Dendritic cell treated with granulocyte-macrophage colony-stimulating factor and Interleukin-4, amounts not matched to agents 40 ng/mL and 50 ng/mL, for 4 days (primary cell): ENCODE measurements at regions of chr15 and their contacts with region 1.

Region 1: GRCh38 chr15:100330629-100331215 is 11.1 kb downstream of the ADAMTS17 start:
- H3K4me3 Mint-ChIP-seq: no peak overlapping the region
- H3K27ac Mint-ChIP-seq: no peak overlapping the region
- H3K4me1 Mint-ChIP-seq: no peaks in the 10 kb centered on the region
- H3K27me3 Mint-ChIP-seq: peaks cover 42% of the 10 kb centered on the region

Region 2: GRCh38 chr15:99931703-99932603 is 398.8 kb before region 1 on chr15:
- intact Hi-C with region 1: loop called (anchors 5 kb)
- H3K4me3 Mint-ChIP-seq: no peak overlapping the region
- H3K27ac Mint-ChIP-seq: no peak overlapping the region
- H3K4me1 Mint-ChIP-seq: peaks cover 8% of the 10 kb centered on the region
- H3K27me3 Mint-ChIP-seq: peaks cover 49% of the 10 kb centered on the region

Region 3: DNA sequence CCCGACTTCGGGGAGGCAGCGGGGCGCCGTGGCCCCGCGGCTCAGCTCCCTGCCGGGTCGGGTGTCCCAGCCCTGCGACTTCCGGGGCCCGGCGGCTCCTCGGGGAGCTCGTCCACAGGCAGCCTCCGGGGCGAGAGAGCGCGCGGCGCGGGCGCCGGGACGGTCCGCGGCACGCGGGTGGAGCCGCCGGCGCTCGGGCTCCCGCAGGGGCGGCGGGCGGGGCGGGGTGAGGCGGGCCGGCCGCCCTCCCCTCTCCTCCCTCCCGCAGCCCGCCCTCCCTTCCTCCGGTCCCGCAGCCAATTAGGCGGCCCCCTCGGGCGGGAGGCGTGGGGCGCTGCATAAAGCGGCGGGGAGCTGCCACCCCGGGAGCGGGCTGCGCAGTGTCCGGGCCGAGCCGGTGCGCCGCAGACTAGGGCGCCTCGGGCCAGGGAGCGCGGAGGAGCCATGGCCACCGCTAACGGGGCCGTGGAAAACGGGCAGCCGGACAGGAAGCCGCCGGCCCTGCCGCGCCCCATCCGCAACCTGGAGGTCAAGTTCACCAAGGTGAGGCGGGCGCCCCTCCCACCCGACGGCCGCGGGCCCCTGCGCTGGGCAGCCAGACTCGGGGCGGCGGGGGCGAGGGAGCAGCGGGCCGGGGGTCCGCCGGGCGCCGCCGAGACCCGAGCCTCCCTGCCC is 548.9 kb after region 1 on chr15 and contains the start of gene ALDH1A3:
- intact Hi-C with region 1: no loop called
- H3K4me3 Mint-ChIP-seq: peak within 1 kb of the TSS; percentile 11
- H3K27ac Mint-ChIP-seq: no peak within 1 kb of the TSS
- H3K4me1 Mint-ChIP-seq: peaks cover 7% of the 10 kb centered on the region
- H3K27me3 Mint-ChIP-seq: peaks cover 88% of the 10 kb centered on the region